Right cardiac atrium (tissue), 5 donors: ENCODE measurements at regions of chr2 and their contacts with region 1.

Region 1: GRCh38 chr2:60550178-60550983 is 3.1 kb downstream of the BCL11A start:
- DNase-seq: peak; percentile 40 to 80 (median 78)
- ATAC-seq: peak; percentile 79
- H3K4me3 ChIP-seq: peak overlapping the region; percentile 66
- H3K27ac ChIP-seq: peak overlapping the region; percentile 26
- H3K4me1 ChIP-seq: no peaks in the 10 kb centered on the region
- H3K27me3 ChIP-seq: no peaks in the 10 kb centered on the region

Region 2: DNA sequence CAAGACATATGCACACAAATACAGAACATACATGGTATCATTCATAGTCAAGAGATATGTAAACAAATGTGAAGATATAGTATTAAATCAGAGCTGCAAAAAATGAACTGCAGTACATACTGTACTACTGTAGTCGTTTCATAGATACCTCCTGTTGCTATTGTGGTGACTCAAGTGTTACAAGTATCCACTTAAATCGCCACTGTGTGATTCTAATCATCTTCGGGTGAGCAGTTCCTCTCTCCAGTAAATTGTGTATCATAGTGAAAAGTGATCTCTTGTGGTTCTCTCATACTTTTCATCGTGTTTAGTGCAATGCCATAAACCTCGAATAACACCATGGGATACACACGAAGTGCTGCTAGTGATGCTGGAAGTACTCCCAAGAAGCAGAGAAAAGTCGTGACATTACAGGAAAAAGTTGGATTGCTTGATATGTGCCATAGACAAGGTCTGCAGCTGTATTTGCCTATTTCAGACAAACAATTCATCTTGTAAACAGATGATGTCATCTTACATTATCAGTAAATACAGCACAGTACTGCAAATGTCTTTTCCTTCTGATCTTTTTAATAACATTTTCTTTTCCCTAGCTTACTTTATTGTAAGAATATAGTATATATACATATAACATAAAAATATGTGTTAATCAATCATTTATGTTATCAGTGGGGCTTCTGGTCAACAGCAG is 219.1 kb before region 1 on chr2:
- intact Hi-C with region 1: loop called in 3 of 4 experiments (anchors 5 to 10 kb)
- DNase-seq: no peak
- ATAC-seq: no peak
- H3K4me3 ChIP-seq: no peak overlapping the region
- H3K27ac ChIP-seq: no peak overlapping the region
- H3K4me1 ChIP-seq: no peaks in the 10 kb centered on the region
- H3K27me3 ChIP-seq: no peaks in the 10 kb centered on the region

Region 3: DNA sequence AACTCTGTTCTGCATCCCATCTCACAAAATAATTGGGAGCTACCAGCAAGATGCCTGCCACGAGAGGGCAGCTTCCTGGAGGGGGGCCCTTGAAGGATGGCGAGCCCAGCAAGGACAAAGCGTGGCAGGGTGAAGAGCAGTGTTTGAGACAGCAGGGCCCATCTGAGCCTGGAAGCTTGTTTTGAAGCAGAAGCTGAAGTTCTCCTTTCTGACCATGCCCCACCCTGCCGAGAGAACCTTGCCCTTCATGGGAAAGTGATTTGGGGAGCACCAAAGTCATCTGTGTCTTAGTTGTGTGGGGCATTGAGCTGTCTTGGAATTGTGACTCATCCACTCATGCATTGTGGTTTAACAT is 213.3 kb before region 1 on chr2:
- intact Hi-C with region 1: loop called in 3 of 4 experiments (anchors 5 to 10 kb)
- DNase-seq: no peak
- ATAC-seq: peak in 1 of 2 donors; percentile 41
- H3K4me3 ChIP-seq: no peak overlapping the region
- H3K27ac ChIP-seq: no peak overlapping the region
- H3K4me1 ChIP-seq: no peaks in the 10 kb centered on the region
- H3K27me3 ChIP-seq: no peaks in the 10 kb centered on the region

Region 4: DNA sequence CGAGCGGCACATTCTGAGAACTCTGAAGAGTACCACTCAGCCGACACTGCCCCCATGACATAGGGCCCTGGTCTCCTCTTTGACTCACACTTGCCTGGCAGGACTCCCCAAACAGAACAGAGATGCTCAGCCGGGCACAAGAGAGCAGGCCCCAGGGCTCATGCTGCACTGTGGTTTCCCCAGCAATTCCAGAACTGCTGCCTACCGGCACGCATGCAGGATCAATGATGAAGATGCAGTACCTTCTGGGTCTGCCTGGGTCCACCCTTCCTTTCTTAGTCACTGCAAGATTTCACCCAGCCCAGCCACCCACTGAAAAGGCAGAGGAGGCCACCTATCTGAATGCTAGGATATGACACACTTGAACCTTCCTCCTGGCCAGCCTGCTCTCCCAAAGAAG is 46.3 kb before region 1 on chr2:
- intact Hi-C with region 1: loop called in 1 of 4 experiments (anchors 5 kb)
- DNase-seq: no peak
- ATAC-seq: peak in 1 of 2 donors; percentile 37
- H3K4me3 ChIP-seq: no peak overlapping the region
- H3K27ac ChIP-seq: no peak overlapping the region
- H3K4me1 ChIP-seq: peaks cover 6% of the 10 kb centered on the region
- H3K27me3 ChIP-seq: no peaks in the 10 kb centered on the region